WTC11 (cell line): ENCODE measurements at regions of chr2 and their contacts with region 1.

Region 1: GRCh38 chr2:240913810-240914644 is 7.9 kb downstream of the CROCC2 start:
- DNase-seq: peak; percentile 95
- ATAC-seq: peak; percentile 75
- H3K4me3 Mint-ChIP-seq: no peak overlapping the region
- H3K27ac Mint-ChIP-seq: no peak overlapping the region
- H3K4me1 Mint-ChIP-seq: no peaks in the 10 kb centered on the region
- H3K27me3 Mint-ChIP-seq: peaks cover 6% of the 10 kb centered on the region
- CTCF ChIP-seq: peak; percentile 96

Region 2: GRCh38 chr2:240814280-240814679 is 99.7 kb before region 1 on chr2:
- CTCF ChIA-PET with region 1: no interaction called
- POLR2A ChIA-PET with region 1: no interaction called
- DNase-seq: no peak
- ATAC-seq: no peak
- H3K4me3 Mint-ChIP-seq: no peak overlapping the region
- H3K27ac Mint-ChIP-seq: peak overlapping the region; percentile 22
- H3K4me1 Mint-ChIP-seq: peaks cover 38% of the 10 kb centered on the region
- H3K27me3 Mint-ChIP-seq: no peaks in the 10 kb centered on the region; the same call in 1 of the 2 replicates
- CTCF ChIP-seq: no peak

Region 3: DNA sequence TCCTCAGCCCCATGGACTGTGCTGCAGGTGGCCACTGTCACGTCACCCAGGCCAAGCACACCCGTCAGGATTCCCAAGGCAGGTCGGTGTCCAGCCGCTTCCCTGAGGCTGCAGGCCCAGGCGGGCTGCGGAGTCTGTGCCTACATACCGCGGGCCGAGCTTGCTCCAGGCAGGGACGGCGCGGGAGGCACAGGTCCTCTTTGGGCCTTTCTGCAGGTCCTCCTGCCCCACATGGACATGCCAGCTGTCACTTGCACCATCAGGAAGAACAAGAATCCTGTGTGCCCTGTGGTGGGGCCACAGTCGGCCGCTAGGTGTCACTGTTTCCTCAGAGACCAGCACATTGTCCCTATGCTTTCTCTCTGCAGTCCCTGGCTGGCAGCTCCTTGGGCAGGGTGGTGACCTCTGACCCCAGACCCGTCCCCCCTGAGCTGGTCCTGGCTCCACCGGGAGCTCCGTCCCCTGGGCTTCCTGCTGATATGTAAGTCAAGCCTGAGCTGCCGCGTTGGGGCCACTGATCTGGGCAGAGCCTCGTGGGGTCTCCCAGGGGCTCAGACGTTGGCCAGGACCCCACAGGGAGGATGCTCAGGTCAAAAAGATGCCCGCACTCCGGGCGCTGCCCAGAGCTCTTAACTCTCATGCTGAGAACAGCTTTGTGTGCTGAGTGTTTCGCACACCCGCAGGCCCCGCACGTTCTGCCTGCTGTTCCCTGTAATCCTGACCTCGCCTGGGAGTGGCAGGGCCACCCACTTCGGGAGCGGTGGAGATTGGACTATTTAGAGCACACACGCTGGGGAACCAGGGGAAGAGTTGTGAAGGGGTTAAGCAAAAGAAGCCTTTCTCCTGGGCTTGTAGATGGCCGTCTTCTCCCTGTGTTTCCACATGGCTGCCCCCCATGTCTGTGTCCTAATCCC is 62.7 kb before region 1 on chr2:
- CTCF ChIA-PET with region 1: interaction called, 38 read pairs
- POLR2A ChIA-PET with region 1: no interaction called
- DNase-seq: peak; percentile 94
- ATAC-seq: peak; percentile 99
- H3K4me3 Mint-ChIP-seq: no peak overlapping the region
- H3K27ac Mint-ChIP-seq: 0 out of 2 replicates have a peak overlapping the region, but pooled peaks have one; percentile 53
- H3K4me1 Mint-ChIP-seq: peaks cover 10% of the 10 kb centered on the region
- H3K27me3 Mint-ChIP-seq: no peaks in the 10 kb centered on the region; the same call in none of the 2 replicates
- CTCF ChIP-seq: peak; percentile 89

Region 4: DNA sequence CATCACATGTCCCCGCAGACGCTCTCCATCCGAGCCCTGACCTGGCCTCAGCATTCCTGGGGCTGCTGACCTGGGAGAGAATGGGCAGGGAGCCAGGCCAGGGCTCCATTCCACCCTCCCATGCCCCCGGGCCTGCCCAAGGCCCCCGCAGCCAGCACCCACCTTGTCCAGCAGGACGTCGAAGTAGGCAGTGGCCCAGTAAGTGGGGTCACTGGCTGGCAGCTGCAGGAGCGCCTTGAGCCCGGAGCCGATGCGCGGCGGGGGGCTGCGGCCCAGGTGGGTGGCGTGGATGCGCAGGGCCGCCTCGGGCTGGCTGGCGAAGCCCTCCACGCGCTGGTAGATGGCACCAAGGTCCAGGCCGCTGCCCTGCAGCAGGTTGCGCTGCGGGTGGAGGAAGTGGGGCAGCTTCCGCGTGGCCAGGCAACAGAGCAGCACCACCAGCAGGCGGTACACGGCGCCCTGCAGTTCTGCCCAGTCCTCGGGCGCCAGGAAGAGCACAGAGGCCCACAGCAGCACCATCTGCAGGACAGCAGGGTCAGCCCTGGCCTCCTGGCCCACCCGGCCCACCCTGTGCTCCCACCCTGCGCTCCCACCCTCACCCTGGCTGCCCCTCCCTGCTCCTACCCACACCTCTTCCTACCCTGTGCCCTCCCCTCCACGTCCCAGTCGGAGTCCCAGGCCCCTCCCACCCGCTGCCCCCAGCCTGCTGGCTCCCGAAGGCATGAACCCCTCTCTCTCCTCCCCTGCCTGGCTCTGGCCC is 25.7 kb before region 1 on chr2:
- CTCF ChIA-PET with region 1: interaction called, 13 read pairs
- POLR2A ChIA-PET with region 1: no interaction called
- DNase-seq: no peak
- ATAC-seq: peak; percentile 41
- H3K4me3 Mint-ChIP-seq: no peak overlapping the region
- H3K27ac Mint-ChIP-seq: no peak overlapping the region
- H3K4me1 Mint-ChIP-seq: no peaks in the 10 kb centered on the region
- H3K27me3 Mint-ChIP-seq: no peaks in the 10 kb centered on the region
- CTCF ChIP-seq: no peak

Region 5: DNA sequence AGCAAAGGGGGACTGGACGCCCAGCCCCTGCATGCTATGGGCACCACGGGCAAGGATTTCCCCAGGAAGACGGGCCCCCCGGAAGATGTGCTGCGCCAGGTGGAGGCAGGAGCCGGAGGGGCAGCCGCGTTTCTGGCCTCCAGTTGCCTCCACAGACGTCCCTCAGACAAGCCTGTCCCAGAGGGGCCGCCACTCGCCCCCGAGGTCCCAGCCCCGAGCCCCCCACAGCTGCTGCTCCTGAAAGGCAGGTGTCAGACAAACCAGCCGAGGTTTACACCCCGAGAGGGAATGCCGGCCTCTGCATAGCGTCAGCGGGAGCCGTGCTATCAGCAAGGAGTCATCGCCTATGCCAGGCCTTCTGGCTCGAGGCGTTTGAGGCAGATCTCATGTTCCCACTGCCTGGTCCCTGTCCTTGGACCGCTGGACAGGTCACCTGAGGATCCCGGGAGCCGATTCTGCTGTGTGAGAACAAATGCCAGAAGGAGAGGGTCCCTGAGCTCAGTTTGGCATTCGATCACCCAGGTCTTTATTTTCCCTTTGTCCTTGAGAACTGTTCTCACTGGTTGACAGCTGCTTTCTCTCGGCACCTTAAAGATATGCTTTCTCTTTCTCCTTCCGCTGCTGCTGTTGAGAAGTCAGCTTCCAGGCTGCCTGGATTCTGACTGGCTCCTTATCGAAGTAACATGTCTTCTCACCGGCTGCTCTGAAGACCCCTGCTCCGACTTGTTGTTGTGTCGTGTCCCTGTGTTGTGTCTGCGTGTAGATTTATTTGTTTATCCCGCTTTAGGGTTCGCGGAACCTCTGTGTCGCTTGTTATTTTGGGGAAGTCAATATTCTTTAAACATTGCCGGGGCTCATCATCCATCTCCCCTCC is 12.7 kb after region 1 on chr2:
- CTCF ChIA-PET with region 1: interaction called, 13 read pairs
- POLR2A ChIA-PET with region 1: interaction called, 3 read pairs
- DNase-seq: peak; percentile 11
- ATAC-seq: no peak
- H3K4me3 Mint-ChIP-seq: no peak overlapping the region
- H3K27ac Mint-ChIP-seq: peak overlapping the region; percentile 1; the same call in 1 of the 2 replicates
- H3K4me1 Mint-ChIP-seq: no peaks in the 10 kb centered on the region
- H3K27me3 Mint-ChIP-seq: no peaks in the 10 kb centered on the region
- CTCF ChIP-seq: no peak

Region 6: GRCh38 chr2:241064008-241064801 is 150.2 kb after region 1 on chr2:
- CTCF ChIA-PET with region 1: interaction called, 12 read pairs
- POLR2A ChIA-PET with region 1: no interaction called
- DNase-seq: peak; percentile 43
- ATAC-seq: peak; percentile 55
- H3K4me3 Mint-ChIP-seq: peak overlapping the region; percentile 14; the same call in 1 of the 2 replicates
- H3K27ac Mint-ChIP-seq: no peak overlapping the region
- H3K4me1 Mint-ChIP-seq: no peaks in the 10 kb centered on the region
- H3K27me3 Mint-ChIP-seq: no peaks in the 10 kb centered on the region
- CTCF ChIP-seq: no peak